Dorsolateral prefrontal cortex (tissue), 120 donors: ENCODE measurements at regions of chr10 and their contacts with region 1.

Region 1: DNA sequence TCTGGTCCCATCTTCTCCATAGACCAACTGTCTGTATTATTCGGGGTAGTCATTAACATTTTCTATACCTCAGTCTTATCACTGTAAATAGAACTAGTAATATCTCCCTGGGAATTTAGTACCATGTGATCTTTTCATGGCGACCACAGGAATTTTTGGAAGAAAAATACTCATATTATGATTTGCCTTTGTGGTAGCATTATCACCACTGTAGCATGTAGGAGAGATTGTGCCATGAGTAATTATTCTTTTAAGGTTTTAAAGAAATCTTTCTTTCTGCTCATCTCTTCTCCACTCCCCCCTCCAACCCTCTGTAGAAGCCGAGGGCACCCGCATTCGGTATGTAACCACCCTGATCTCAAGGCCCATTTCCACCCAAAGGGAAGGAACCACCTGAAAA is 25.0 kb downstream of the ZNF365 start:
- DNase-seq: no peak
- H3K4me3 ChIP-seq: no peak overlapping the region
- H3K27ac ChIP-seq: peak overlapping the region in 26 of 59 donors; percentile 0 to 77 (median 40)
- H3K27me3 ChIP-seq: no peaks in the 10 kb centered on the region
- CTCF ChIP-seq: no peak

Region 2: DNA sequence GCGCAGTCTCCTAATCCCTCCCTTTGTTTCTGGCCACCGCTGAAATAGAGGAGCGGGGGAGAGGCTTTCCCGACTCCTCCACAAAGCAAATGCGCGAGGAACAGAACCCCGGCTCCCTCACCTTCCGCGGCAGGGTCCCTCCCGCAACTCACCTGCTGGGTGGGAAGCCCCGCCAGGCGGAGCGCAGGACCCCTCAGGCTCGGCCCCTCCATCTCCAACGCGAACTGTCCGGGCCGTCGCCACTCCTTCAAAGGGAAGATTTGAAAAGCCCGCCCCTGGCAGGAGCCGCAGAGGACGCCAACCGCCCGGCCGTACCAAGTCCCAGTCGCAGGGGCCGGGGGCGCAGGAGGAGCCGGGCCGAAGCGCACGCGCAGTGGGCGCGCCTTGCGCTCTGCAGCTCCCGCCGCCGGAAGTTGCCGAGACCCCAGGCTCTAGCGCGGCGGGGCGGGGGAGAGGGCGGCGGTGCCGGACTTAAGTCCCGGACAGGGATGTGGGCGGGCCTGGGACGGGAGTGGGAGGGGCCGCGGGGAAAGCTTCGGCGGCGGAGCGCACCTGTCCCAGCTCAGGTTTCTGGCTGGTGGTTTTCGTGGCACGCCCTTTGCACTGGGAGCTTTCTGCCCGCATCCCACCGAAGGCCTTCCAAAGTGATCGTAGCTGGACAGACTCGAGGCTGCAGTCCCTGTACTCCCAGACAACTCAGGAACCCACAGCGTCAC is 130.7 kb before region 1 on chr10 and contains the start of gene RTKN2:
- intact Hi-C with region 1: loop called (anchors 10 kb)
- DNase-seq: peak; percentile 22 to 86 (median 62)
- H3K4me3 ChIP-seq: peak within 1 kb of the TSS; percentile 56 to 90 (median 77)
- H3K27ac ChIP-seq: peak within 1 kb of the TSS in 37 of 59 donors; percentile 1 to 80 (median 44)
- H3K27me3 ChIP-seq: no peaks in the 10 kb centered on the region
- CTCF ChIP-seq: peak in 4 of 56 donors; percentile 4 to 16 (median 14)
- total RNA-seq, gene RTKN2: 1.1 to 8.2 (median 3.5) TPM

Region 3: DNA sequence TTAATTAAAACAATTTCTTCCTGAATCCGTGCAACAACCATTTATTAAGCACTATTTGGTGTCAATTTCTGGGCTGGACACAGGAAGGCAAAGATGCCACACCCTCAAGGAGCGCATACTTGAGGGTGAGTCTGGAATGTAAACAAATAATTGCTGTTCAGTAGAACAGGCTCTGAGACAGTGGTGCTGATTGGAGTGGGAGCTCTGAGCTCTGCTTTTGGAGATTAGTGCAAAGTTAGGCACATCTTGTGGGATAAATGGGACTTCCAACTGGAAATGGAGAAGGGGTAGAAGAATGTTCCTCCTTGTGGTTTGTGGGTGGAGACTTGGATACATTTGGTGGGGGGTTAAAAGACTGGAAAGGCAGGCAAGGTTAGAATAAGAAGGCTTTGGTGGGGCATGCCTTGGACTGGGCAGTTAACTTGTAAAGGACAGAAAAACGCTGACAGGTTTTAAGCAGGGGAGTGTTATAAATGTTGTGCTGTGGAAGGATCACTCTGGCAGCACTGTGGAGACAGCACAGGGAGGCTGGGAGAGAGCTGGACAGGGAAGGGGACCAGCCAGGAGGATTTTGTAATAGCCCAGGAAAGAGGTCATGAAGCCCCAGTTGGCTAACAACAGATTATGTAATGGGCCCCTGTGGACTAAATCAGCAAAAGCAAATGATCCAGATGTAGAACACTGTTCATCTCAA is 55.6 kb after region 1 on chr10:
- intact Hi-C with region 1: no loop called
- DNase-seq: no peak
- H3K4me3 ChIP-seq: no peak overlapping the region
- H3K27ac ChIP-seq: no peak overlapping the region
- H3K27me3 ChIP-seq: peaks cover 0 to 3% (median 0%) of the 10 kb centered on the region in 45 donors
- CTCF ChIP-seq: no peak